Activated CD4-positive, alpha-beta T cell treated with anti-CD3 and anti-CD28 coated beads for 36 hours (primary cell): ENCODE measurements at regions of chr1 and their contacts with region 1.

Region 1: GRCh38 chr1:116724765-116725375 is 29.4 kb upstream of the CD2 start:
- DNase-seq: peak; percentile 91
- ATAC-seq: peak; percentile 86
- H3K4me3 Mint-ChIP-seq: no peak overlapping the region
- H3K27ac Mint-ChIP-seq: peak overlapping the region; percentile 26
- H3K4me1 Mint-ChIP-seq: peaks cover 32% of the 10 kb centered on the region
- H3K27me3 Mint-ChIP-seq: no peaks in the 10 kb centered on the region

Region 2: DNA sequence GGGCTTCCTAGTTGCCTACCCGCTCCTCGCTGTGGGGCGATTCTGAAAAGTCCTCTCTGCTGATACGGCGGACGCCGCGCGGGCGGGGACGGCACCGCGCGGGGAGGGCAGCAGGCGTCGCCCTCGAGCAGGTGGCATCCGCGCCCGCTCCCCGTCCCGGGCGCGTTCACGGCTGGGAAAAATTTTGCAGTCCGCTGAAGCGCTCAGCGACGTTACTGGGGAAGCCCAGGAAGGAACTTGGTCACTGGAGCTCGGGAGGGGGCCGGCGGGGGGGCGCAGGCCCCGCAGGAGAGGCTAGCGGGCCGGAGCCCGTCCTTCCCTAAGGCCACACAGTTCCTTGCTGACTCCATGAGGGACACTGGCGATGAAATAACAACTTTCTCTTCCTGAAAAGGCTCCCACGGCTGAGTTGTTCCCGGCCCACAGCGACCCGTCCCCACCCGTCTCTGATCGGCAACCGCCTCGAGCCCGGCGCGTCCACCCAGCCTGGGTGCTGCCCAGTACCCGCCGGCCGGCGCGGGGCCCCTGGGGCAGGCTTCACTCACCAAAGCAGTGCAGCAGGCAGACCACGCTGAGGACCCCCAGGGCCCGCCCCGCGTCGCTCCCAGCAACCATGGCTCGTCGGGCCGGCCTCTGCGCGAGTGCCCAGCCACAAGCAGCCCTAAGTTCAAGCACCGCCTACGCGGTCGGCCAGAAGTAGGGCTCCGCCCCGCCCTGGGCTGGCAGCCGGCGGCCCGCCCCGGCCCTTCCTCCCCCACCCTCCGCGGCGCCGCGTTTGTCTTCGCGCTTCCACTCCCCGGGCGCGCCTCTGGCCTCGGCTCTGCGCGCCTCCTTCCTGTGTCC is 154.3 kb before region 1 on chr1 and contains the start of gene CD58:
- CTCF ChIA-PET with region 1: no interaction called
- POLR2A ChIA-PET with region 1: no interaction called
- intact Hi-C with region 1: loop called in 1 of 2 experiments (anchors 1 kb)
- DNase-seq: peak; percentile 93
- ATAC-seq: peak; percentile 77
- H3K4me3 Mint-ChIP-seq: peak within 1 kb of the TSS; percentile 91
- H3K27ac Mint-ChIP-seq: peak within 1 kb of the TSS; percentile 87
- H3K4me1 Mint-ChIP-seq: peaks cover 64% of the 10 kb centered on the region
- H3K27me3 Mint-ChIP-seq: peaks cover 8% of the 10 kb centered on the region
- total RNA-seq, gene CD58: 12.4 to 16.0 TPM

Region 3: GRCh38 chr1:116711263-116711840 is 13.5 kb before region 1 on chr1:
- CTCF ChIA-PET with region 1: interaction called, 10 read pairs
- POLR2A ChIA-PET with region 1: no interaction called
- intact Hi-C with region 1: no loop called
- DNase-seq: peak; percentile 67
- ATAC-seq: peak; percentile 99
- H3K4me3 Mint-ChIP-seq: no peak overlapping the region
- H3K27ac Mint-ChIP-seq: no peak overlapping the region
- H3K4me1 Mint-ChIP-seq: peaks cover 15% of the 10 kb centered on the region
- H3K27me3 Mint-ChIP-seq: peaks cover 5% of the 10 kb centered on the region

Region 4: DNA sequence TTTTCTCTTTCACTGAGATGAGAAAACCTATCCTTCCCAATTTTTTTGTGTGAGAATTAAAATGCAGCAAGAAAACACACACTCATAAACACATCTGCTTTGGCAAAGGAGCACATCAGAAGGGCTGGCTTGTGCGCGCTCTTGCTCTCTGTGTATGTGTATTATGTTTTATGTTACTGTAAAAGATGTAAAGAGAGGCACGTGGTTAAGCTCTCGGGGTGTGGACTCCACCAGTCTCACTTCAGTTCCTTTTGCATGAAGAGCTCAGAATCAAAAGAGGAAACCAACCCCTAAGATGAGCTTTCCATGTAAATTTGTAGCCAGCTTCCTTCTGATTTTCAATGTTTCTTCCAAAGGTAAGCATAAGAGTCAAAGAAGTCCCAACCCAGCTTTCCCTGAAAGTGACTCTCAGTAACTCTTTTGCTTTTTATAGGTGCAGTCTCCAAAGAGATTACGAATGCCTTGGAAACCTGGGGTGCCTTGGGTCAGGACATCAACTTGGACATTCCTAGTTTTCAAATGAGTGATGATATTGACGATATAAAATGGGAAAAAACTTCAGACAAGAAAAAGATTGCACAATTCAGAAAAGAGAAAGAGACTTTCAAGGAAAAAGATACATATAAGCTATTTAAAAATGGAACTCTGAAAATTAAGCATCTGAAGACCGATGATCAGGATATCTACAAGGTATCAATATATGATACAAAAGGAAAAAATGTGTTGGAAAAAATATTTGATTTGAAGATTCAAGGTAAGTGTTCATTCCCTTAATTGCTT is 29.5 kb after region 1 on chr1 and contains the start of gene CD2:
- CTCF ChIA-PET with region 1: interaction called, 11 read pairs
- POLR2A ChIA-PET with region 1: no interaction called
- intact Hi-C with region 1: no loop called
- DNase-seq: peak; percentile 80
- ATAC-seq: peak; percentile 80
- H3K4me3 Mint-ChIP-seq: peak within 1 kb of the TSS; percentile 93
- H3K27ac Mint-ChIP-seq: peak within 1 kb of the TSS; percentile 100
- H3K4me1 Mint-ChIP-seq: peaks cover 41% of the 10 kb centered on the region
- H3K27me3 Mint-ChIP-seq: no peaks in the 10 kb centered on the region
- total RNA-seq, gene CD2: 287 to 291 TPM

Region 5: DNA sequence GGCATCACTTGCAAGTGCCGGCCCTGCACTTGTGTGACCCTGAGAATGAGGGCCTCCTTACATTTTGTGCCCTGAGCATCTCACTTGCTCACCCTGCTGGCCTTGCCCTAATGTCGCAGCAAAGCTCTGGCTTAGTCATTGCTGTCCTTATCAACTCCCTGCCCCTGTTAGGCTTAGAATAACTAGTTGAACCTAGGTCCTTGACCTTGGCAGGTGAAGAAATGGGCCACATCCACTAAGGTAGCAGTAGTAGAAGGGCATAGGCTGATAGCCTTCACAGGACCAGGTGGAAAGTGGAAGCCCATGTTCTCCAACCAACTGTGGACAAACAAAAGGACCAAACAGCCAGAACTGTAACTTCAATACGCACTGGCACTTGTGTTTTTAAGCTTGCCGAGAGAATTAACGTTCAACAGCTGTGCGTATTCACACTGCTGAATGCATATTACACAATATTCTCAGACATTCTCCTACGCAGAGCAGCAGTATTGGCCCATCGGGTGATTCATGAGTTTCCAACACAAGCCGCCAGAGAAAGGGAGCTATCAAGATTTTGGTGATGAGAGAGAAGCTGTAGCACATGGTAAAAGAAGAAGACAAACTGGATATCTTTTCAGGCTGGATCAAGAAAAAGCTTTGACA is 157.1 kb after region 1 on chr1:
- CTCF ChIA-PET with region 1: interaction called, 5 read pairs
- POLR2A ChIA-PET with region 1: no interaction called
- intact Hi-C with region 1: loop called (anchors 2 to 5 kb)
- DNase-seq: peak; percentile 72
- ATAC-seq: peak; percentile 77
- H3K4me3 Mint-ChIP-seq: no peak overlapping the region
- H3K27ac Mint-ChIP-seq: no peak overlapping the region
- H3K4me1 Mint-ChIP-seq: peaks cover 14% of the 10 kb centered on the region
- H3K27me3 Mint-ChIP-seq: no peaks in the 10 kb centered on the region

Region 6: GRCh38 chr1:117128323-117129079 is 403.6 kb after region 1 on chr1:
- CTCF ChIA-PET with region 1: interaction called, 7 read pairs
- POLR2A ChIA-PET with region 1: no interaction called
- intact Hi-C with region 1: loop called (anchors 5 to 10 kb)
- DNase-seq: no peak
- ATAC-seq: peak; percentile 44
- H3K4me3 Mint-ChIP-seq: no peak overlapping the region
- H3K27ac Mint-ChIP-seq: no peak overlapping the region
- H3K4me1 Mint-ChIP-seq: no peaks in the 10 kb centered on the region
- H3K27me3 Mint-ChIP-seq: peaks cover 9% of the 10 kb centered on the region

Region 7: DNA sequence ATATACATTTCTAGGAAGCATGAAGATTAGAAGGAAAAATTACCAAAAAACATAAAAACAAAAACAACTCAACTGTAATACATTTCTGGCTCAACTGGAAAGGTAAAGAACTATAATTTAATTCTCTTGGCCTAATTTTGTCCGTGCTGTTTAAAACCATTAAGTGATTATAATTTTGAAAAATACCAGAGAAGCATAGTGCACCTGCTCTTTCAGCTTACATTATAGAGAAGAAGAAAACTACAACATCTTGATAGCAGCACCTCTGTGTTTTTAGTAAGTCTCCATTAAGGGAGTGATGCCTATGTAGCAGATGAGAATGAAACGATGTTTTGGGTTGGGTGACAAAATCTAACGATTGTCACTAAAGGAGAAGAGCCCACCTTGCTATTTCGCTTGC is 623.0 kb after region 1 on chr1:
- CTCF ChIA-PET with region 1: no interaction called
- POLR2A ChIA-PET with region 1: no interaction called
- intact Hi-C with region 1: no loop called
- DNase-seq: no peak
- ATAC-seq: no peak
- H3K4me3 Mint-ChIP-seq: no peak overlapping the region
- H3K27ac Mint-ChIP-seq: no peak overlapping the region
- H3K4me1 Mint-ChIP-seq: peaks cover 10% of the 10 kb centered on the region
- H3K27me3 Mint-ChIP-seq: peaks cover 1% of the 10 kb centered on the region